ENCODE measurements at regions of chr7 and their contacts with region 1.

Region 1: GRCh38 chr7:158976849-158977593 is 120.7 kb downstream of the DYNC2I1 start:
- DNase-seq: peak; percentile 96
- H3K4me3 Mint-ChIP-seq: peak overlapping the region; percentile 78
- H3K27ac Mint-ChIP-seq: peak overlapping the region; percentile 91
- H3K4me1 Mint-ChIP-seq: peaks cover 15% of the 10 kb centered on the region
- H3K27me3 Mint-ChIP-seq: no peaks in the 10 kb centered on the region

Region 2: GRCh38 chr7:158394936-158395335 is 582.1 kb before region 1 on chr7:
- intact Hi-C with region 1: loop called (anchors 10 kb)
- DNase-seq: peak; percentile 73
- H3K4me3 Mint-ChIP-seq: no peak overlapping the region
- H3K27ac Mint-ChIP-seq: no peak overlapping the region
- H3K4me1 Mint-ChIP-seq: no peaks in the 10 kb centered on the region
- H3K27me3 Mint-ChIP-seq: no peaks in the 10 kb centered on the region

Region 3: DNA sequence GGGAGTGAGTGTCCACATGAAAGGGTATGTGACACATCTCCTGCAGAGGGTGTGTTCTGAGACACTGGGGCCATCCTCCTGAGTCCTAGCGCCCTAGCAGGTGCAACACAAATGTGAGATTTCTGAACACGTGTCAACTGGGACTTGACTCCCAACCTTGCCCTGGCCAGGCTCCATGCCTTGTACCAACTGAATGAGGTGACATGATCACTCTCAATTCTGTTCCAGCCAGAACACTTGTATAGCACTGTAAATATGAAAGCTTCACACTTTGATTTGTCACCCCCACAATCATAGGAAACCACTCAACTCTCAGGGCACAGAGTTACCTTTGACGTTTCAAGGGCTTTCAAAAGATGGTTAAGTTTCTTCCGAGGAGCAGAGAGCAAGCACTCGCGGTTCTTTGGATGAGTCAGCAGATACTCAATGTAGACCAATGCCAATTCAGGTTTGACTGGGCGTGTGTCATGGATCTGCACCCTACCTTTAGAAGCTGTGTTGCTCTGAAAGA is 321.0 kb before region 1 on chr7:
- intact Hi-C with region 1: loop called (anchors 1 kb)
- DNase-seq: peak; percentile 88
- H3K4me3 Mint-ChIP-seq: peak overlapping the region; percentile 71
- H3K27ac Mint-ChIP-seq: peak overlapping the region; percentile 92
- H3K4me1 Mint-ChIP-seq: peaks cover 24% of the 10 kb centered on the region
- H3K27me3 Mint-ChIP-seq: no peaks in the 10 kb centered on the region

Region 4: DNA sequence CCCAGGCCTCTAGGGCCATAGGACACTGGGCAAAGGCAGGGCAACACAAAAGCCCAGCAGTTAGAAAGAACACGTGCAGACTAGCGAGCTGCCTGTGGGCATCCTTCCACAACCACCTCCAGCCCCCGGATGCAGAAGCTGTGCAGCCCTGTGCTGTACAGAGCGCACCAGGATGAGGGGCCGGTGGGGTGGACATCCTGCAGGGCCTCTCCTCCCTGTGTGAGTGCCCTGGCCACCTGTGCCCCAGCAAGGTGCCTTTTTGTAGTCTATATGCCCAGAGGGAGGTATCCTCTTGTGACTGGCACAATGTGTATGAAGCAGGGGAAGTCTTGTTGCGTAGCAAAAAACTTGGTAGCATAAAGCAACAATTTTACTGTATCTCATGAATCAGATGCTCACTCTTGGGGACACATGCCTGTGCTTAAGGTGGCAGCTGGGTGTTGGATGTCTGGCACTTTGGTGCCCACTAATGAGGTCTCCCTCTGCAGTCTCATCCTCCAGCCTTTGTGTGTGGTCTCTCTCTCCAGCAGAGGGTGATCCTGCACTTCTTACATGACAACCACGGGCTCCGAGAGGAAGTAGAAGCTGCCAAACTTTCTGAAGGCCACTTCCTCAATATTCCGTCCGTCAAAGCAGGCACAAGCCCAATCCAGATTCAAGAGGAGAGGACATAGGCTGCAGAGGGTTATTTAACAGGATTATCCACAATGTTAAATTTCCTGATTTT is 281.1 kb before region 1 on chr7:
- intact Hi-C with region 1: loop called (anchors 1 kb)
- DNase-seq: peak; percentile 82
- H3K4me3 Mint-ChIP-seq: no peak overlapping the region
- H3K27ac Mint-ChIP-seq: peak overlapping the region; percentile 65
- H3K4me1 Mint-ChIP-seq: peaks cover 46% of the 10 kb centered on the region
- H3K27me3 Mint-ChIP-seq: no peaks in the 10 kb centered on the region

Region 5: DNA sequence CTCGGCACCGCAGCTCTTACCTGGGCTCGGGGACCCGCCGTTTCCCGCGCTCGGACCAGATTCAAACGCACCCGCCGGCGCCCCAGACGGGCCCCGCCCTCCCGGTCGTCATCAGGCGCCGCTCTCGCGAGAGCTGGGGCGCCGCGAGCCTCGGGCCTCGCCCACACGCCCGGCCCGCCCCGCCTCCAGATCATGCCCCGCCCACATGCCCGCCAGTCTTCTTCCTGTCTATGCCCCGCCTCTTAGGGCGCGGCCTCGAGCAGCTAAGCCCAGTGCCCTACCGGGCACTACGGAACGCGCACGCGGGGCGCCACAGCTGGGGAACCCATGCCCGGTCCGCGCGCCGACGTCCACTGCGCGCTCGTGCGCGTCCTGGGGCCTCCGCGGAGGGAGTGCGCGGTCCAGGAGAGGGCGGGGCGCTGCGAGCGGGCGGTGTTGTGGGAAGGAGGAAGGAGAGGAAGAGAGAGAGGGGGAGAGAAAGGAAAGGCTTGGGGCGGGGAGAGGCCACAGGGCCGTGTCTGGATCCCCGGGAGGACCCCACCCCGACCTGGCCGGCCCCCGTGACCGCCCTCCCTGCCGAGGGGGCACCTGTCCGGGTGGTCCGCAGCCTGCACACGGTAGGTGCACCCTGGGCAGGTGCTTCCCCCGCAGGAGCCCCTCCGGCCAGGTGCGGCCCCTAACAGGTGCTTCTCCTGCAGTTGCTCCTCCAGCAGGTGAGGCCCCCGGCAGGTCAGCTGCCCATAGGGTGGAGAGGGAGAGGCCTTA is 272.1 kb before region 1 on chr7 and contains the start of gene NCAPG2:
- intact Hi-C with region 1: loop called (anchors 2 kb)
- DNase-seq: peak; percentile 99
- H3K4me3 Mint-ChIP-seq: peak within 1 kb of the TSS; percentile 90
- H3K27ac Mint-ChIP-seq: peak within 1 kb of the TSS; percentile 93
- H3K4me1 Mint-ChIP-seq: peaks cover 41% of the 10 kb centered on the region
- H3K27me3 Mint-ChIP-seq: no peaks in the 10 kb centered on the region
- total RNA-seq, gene NCAPG2: 94.6 and 96.3 TPM in 2 replicates

Region 6: DNA sequence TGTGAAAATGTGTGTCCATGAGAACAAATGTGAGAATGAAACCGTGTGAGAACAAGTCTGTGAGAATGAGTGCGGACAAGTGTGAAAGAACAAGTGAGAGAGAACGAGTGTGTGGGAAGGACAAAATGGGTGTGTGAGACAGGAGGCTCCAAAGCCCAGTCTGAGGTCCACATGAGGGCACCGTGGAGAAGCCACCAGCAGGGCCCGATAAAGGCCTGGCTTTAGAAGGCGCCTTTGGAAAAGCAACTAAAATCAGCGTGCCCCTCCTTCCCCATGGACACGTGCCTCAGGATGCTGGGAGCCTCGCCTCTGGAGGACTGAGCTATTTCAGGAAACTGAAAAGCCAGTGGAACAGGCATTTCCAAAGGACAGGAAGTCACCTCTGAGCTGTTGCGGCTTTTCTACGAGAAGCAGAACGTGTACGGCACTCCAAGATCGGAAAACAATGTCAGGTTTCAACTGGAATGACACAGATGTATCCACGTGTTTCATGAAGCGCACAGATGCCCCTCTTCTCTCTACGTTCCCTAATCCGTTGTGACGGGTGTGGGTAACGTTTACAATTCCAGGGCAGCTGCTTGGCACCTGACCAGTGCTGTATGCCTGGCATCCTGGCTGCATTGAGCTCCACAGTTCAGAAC is 194.1 kb before region 1 on chr7:
- intact Hi-C with region 1: loop called (anchors 10 kb)
- DNase-seq: peak; percentile 66
- H3K4me3 Mint-ChIP-seq: no peak overlapping the region
- H3K27ac Mint-ChIP-seq: no peak overlapping the region
- H3K4me1 Mint-ChIP-seq: peaks cover 2% of the 10 kb centered on the region
- H3K27me3 Mint-ChIP-seq: no peaks in the 10 kb centered on the region

Region 7: DNA sequence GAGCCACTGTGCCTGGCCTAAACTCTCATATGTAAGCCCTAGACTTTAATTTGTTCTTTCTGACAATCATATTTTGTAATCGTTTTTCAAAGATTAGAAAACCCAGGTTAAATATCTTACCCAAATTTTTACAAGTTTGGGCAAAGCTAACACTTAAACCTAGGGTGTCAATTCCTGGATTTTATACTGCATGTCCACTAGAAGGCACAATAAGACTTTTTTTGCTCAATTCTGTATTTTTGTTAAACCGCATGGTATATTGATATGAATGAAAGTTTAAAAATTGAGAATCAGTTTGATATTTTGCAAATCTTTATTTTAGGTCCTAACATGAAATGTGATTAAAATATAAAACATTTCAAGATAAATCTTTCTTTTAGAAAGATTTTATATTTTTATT is 91.4 kb before region 1 on chr7:
- intact Hi-C with region 1: loop called (anchors 2 kb)
- DNase-seq: no peak
- H3K4me3 Mint-ChIP-seq: no peak overlapping the region
- H3K27ac Mint-ChIP-seq: no peak overlapping the region
- H3K4me1 Mint-ChIP-seq: no peaks in the 10 kb centered on the region
- H3K27me3 Mint-ChIP-seq: no peaks in the 10 kb centered on the region

Measured in activated CD4-positive, alpha-beta T cell treated with anti-CD3 and anti-CD28 coated beads, Interleukin-2, amount 10 ng/mL, durations not matched to agents 24 days and 14 days (primary cell).